ENCODE measurements at regions of chr15 and their contacts with region 1.

Region 1: GRCh38 chr15:63487076-63487757 is 17.2 kb upstream of the USP3 start:
- DNase-seq: peak; percentile 82
- H3K4me3 Mint-ChIP-seq: peak overlapping the region; percentile 13
- H3K27ac Mint-ChIP-seq: peak overlapping the region; percentile 40
- H3K4me1 Mint-ChIP-seq: peaks cover 49% of the 10 kb centered on the region
- H3K27me3 Mint-ChIP-seq: no peaks in the 10 kb centered on the region

Region 2: DNA sequence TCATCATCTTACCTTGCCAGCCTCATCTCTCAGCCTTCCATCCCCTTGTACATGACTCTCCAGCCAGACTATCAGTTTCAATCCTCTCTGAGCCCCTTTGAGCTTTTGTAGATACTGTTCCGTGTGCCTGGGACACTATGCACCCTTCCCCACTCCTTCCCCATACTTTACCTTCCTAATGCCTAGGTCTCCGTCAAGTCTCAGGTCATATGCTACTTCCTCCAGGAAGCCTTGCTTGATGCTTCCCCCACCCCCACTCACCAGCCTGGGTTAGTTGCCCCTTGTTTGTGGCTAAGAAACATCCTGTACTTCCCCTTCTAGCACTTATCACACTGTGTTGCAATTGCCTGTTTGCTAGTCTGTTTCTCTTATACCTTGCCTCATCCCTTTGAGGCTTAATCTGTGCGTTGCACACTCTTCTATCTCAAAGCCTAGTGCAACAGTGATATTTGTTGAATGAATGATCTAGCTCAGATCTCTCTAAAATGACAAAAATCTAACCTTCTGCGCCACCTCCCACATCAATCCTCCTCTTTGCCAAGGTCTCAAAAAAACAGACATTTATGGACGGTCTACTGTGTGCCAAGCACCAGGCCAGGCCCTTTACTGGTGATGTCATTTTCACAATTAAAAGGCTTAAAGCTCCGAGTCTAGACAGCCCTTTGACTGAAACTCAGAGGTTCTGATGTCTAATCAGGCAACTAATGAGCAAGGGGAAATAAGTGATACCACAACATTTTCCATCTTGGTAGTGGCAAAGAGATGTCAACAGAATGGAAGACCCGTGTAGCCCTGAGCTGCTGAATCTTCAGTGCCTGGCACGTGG is 10.6 kb after region 1 on chr15:
- intact Hi-C with region 1: loop called (anchors 1 kb)
- DNase-seq: peak; percentile 59
- H3K4me3 Mint-ChIP-seq: no peak overlapping the region
- H3K27ac Mint-ChIP-seq: no peak overlapping the region
- H3K4me1 Mint-ChIP-seq: peaks cover 33% of the 10 kb centered on the region
- H3K27me3 Mint-ChIP-seq: no peaks in the 10 kb centered on the region

Region 3: GRCh38 chr15:64004582-64004981 is 517.4 kb after region 1 on chr15:
- intact Hi-C with region 1: no loop called
- DNase-seq: no peak
- H3K4me3 Mint-ChIP-seq: no peak overlapping the region
- H3K27ac Mint-ChIP-seq: no peak overlapping the region
- H3K4me1 Mint-ChIP-seq: peaks cover 73% of the 10 kb centered on the region
- H3K27me3 Mint-ChIP-seq: peaks cover 2% of the 10 kb centered on the region